ENCODE measurements at regions of chr16 and their contacts with region 1.

Region 1: DNA sequence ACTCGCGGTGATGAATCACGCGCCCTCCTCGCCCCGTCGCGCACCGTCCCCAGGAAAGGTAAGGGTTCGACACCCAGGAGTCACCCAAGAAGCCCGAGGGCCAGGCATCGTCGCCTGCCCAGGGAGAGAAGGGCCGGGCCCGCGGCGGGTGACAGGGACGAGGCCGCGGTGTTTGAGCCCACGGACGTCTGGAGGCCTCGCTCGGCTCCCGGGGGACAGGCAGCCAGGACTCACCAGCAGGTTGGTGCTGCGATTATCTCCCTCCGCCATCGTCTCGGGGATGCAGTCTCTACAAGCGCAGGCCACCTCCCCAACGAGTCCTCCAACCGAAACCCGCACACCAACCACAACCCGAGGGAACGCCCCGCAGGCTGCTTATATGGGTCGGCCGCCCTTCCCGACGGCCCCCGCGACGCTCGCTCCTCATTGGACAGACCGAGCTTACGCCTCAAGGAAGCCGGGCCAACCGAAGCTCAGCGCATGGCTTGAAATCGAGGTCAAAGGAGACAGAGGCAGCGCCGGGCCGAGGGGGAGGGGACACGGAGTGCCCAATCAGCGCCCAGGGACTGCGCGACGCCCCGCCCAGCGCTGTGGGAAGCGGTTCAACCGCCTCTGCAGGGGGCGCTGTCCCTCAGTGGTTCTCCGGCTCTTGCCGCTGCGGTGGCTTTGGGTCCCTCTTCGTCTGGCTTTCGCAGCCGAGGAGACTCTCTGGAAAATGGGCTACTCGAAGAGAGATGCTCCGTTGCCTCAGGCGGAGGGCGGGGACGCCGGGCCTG is at the start of gene ARL6IP1:
- DNase-seq: peak; percentile 99 to 100
- H3K4me3 ChIP-seq: peak within 1 kb of the TSS; percentile 86 to 97
- H3K27ac ChIP-seq: peak within 1 kb of the TSS; percentile 91 to 96
- H3K4me1 ChIP-seq: peaks cover 3 to 21% of the 10 kb centered on the region in 2 donors
- H3K27me3 ChIP-seq: no peaks in the 10 kb centered on the region
- CTCF ChIP-seq: peak; percentile 91 to 98 (median 95)
- total RNA-seq, gene ARL6IP1: 71.6 TPM

Region 2: GRCh38 chr16:18789850-18790724 is 11.3 kb before region 1 on chr16 and contains the start of gene RPS15A:
- intact Hi-C with region 1: loop called (anchors 1 kb)
- DNase-seq: peak; percentile 77 to 97
- H3K4me3 ChIP-seq: peak within 1 kb of the TSS; percentile 69 to 72
- H3K27ac ChIP-seq: peak within 1 kb of the TSS; percentile 62 to 79
- H3K4me1 ChIP-seq: peaks cover 6 to 24% of the 10 kb centered on the region in 2 donors
- H3K27me3 ChIP-seq: no peaks in the 10 kb centered on the region
- CTCF ChIP-seq: no peak
- total RNA-seq, gene RPS15A: 540 TPM

Region 3: GRCh38 chr16:18816286-18816685 is 14.9 kb after region 1 on chr16:
- intact Hi-C with region 1: no loop called
- DNase-seq: no peak
- H3K4me3 ChIP-seq: no peak overlapping the region
- H3K27ac ChIP-seq: no peak overlapping the region
- H3K4me1 ChIP-seq: no peaks in the 10 kb centered on the region
- H3K27me3 ChIP-seq: no peaks in the 10 kb centered on the region
- CTCF ChIP-seq: no peak

Region 4: GRCh38 chr16:18969050-18969854 is 167.9 kb after region 1 on chr16:
- intact Hi-C with region 1: loop called (anchors 5 kb)
- DNase-seq: peak; percentile 41 to 93
- H3K4me3 ChIP-seq: peak overlapping the region; percentile 45 to 57
- H3K27ac ChIP-seq: no peak overlapping the region
- H3K4me1 ChIP-seq: no peaks in the 10 kb centered on the region
- H3K27me3 ChIP-seq: no peaks in the 10 kb centered on the region
- CTCF ChIP-seq: peak; percentile 78 to 95 (median 91)

Region 5: GRCh38 chr16:19014461-19014860 is 213.1 kb after region 1 on chr16:
- intact Hi-C with region 1: no loop called
- DNase-seq: no peak
- H3K4me3 ChIP-seq: no peak overlapping the region
- H3K27ac ChIP-seq: no peak overlapping the region
- H3K4me1 ChIP-seq: no peaks in the 10 kb centered on the region
- H3K27me3 ChIP-seq: no peaks in the 10 kb centered on the region
- CTCF ChIP-seq: no peak

Region 6: DNA sequence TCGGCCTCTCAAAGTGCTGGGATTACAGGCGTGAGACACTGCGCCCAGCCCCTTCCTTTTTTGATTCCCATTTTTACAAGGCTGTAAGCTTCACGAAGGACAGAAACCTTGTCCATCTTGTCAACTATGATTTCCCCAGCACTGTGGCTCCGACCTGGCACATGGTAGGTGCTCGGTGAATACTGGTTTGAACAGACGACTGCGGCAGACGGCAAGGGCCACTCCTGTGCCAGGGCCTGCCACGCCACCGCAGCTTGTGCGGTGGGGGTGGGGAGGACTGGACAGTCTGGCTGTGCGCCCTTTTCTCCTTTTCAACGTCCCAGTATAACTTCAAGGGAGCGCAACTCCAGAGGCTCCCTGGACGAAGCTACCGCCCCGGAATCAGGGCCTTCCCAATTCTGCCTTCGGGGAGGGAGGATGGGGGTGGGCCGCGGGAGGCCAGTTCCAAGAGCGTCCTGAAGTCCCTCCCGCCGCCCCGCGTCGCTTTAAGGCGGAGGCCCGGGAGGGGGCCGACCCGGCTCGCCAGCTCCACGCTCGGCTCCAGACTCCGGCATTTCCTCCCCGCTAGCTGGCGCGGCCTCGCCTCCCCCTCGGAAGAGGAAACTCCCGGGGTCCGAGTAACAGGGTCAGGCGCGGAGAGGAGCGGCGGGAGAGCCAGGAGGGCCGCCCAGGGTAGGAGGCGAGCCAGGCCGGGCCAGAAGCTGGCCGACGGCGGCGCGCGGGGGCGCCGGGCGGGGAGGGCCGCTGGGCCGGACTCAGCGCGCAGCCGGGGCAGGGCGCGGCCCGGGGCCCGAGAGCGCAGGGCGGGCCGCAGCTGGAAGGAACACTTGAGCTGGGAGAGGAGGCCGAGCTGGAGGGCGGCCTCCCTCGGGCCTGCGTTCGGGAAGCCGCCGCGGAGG is 312.3 kb after region 1 on chr16 and contains the start of gene ITPRIPL2:
- intact Hi-C with region 1: loop called (anchors 5 kb)
- DNase-seq: peak; percentile 54 to 94
- H3K4me3 ChIP-seq: peak within 1 kb of the TSS; percentile 75 to 92
- H3K27ac ChIP-seq: peak within 1 kb of the TSS; percentile 98 to 99
- H3K4me1 ChIP-seq: peaks cover 12 to 38% of the 10 kb centered on the region in 2 donors
- H3K27me3 ChIP-seq: no peaks in the 10 kb centered on the region
- CTCF ChIP-seq: peak in 1 of 3 experiments; percentile 16
- total RNA-seq, gene ITPRIPL2: 94.5 TPM

Region 7: DNA sequence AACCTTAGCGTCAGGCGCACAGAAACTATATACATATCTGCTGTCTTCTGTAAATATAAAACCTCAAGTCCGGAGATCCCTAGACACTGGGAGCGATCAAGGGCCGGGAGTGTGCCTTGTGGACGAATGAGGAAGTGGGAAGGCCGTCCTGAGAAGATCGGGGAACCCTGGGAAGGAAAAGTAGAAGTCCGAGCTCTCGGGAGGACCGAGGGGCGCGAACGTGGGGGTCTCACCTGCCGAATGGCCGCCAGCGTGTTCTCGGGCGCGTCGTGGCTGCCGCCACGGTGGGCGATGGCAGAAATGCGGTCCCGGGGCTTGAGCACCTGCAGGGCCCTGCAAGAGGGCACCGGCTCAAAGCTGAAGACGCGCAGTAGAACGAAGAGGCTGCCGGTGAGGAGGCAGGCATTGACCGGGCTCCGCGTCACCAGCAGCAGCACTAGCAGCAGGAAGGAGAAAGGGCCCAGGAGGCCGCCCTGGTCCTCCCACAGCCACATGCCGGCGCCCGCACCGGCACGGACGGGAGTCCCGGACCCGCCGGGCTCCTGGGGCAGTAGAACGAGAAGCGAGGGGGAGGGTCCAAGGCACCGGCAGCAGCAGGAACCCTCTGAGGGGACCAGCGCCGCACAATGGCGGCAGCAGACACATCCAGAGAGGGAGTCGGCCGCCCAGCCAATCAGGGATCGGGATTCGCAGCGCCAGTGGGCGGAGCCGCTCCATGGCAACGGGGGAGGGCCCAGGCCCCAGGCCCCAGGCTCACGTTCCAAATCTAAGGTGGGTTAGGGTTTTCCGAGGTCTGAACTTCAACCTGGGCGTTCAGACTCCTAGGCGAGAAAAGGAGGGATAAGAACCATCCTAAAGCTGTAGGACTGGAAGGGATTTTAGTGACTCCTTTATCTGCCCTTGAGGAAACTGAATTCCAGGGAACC is 720.3 kb after region 1 on chr16 and contains the start of gene GDE1:
- intact Hi-C with region 1: loop called (anchors 2 kb)
- DNase-seq: peak; percentile 82 to 97
- H3K4me3 ChIP-seq: peak within 1 kb of the TSS; percentile 82 to 89
- H3K27ac ChIP-seq: peak within 1 kb of the TSS; percentile 85 to 91
- H3K4me1 ChIP-seq: peaks cover 6 to 31% of the 10 kb centered on the region in 2 donors
- H3K27me3 ChIP-seq: no peaks in the 10 kb centered on the region
- CTCF ChIP-seq: peak; percentile 17 to 55 (median 50)
- total RNA-seq, gene GDE1: 27.4 TPM